ENCODE measurements at regions of chr7 and their contacts with region 1.

Region 1: DNA sequence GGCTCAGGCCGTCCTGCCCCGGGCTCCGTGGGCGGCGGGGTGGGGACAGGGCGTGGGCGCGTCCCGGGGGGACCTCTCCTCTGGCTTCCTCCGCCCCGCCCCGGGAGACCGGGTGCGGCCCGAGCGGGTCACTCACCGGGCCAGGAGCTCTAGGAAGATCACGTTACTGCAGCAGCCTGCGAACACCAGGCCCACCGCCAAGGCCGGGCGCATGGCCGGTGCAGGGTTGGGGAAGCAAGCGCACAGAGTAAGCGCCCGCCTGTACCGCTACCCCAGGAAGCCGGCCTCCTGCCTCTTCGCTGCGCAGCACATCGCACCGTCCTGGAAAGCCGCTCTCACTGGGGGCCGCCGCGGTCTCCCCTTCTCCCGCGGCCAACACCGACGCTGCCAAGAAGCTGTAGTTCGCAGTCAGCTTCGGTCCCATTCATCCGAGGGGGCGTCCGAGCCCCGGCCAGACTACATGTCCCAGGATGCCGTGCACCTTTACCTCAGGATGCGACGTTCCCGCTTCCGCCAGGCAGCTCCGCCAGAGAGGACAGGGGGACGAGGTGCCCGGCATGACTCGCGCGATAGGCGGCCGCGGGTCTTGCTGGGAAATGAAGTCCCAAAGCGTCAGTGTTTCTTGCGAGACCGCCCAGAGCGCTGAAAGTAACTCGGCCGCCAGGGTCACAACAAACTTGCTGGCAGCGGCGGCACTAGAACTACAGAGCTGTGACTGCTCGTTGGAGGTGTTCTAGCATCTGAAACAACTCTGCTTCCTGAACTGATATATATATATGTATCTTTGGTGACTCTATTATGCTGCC is at the start of gene SLC35B4:
- DNase-seq: peak; percentile 98
- H3K4me3 Mint-ChIP-seq: peak within 1 kb of the TSS; percentile 89
- H3K27ac Mint-ChIP-seq: peak within 1 kb of the TSS; percentile 85
- H3K4me1 Mint-ChIP-seq: peaks cover 19% of the 10 kb centered on the region
- H3K27me3 Mint-ChIP-seq: peaks cover 6% of the 10 kb centered on the region

Region 2: DNA sequence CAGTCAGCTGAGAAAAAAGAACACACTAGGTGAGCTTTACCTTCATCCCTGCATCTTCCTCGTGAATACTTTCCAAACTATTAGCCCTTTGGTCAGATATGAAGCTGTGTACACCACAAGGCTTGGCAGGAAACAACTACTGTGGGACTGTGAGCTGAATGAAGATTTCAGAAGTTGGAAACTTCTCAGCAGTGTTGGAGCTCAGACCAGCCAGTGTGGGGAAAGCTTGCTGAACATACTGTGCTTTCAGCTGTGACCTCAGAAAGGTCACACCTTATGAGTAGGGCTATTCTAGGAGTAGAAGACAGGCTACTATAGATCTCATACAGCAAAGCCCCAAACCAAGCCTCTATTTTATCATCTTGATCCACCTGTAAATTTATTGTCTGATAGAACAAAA is 940.2 kb before region 1 on chr7:
- CTCF ChIA-PET with region 1: no interaction called
- DNase-seq: no peak
- H3K4me3 Mint-ChIP-seq: no peak overlapping the region
- H3K27ac Mint-ChIP-seq: no peak overlapping the region
- H3K4me1 Mint-ChIP-seq: no peaks in the 10 kb centered on the region
- H3K27me3 Mint-ChIP-seq: no peaks in the 10 kb centered on the region

Region 3: DNA sequence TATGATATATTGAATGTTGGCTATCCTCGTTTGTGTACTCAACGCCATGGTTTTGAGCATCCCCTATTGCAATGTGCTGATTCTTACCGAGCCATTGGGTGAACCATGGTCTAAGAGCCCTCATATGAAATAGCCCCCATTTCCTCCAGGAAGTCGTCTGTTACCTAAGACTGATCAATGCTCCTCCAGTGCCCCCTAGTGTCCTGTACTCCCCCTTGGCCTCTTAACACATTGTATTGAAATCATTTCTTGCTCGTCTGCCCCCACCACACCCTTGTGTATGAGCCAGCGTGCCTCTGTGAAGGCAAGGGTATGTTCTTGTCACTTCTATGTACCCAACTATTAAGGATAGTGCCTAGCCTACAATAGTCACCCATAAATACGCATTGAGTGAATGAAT is 11.2 kb after region 1 on chr7:
- CTCF ChIA-PET with region 1: interaction called, 10 read pairs
- DNase-seq: peak; percentile 73
- H3K4me3 Mint-ChIP-seq: no peak overlapping the region
- H3K27ac Mint-ChIP-seq: no peak overlapping the region
- H3K4me1 Mint-ChIP-seq: no peaks in the 10 kb centered on the region
- H3K27me3 Mint-ChIP-seq: peaks cover 15% of the 10 kb centered on the region

Measured in activated naive CD4-positive, alpha-beta T cell treated with anti-CD3 and anti-CD28 coated beads, Interleukin-2, amount 10 ng/mL, durations not matched to agents 7 days and 5 days (primary cell).